B cell (primary cell): ENCODE measurements at regions of chr20 and their contacts with region 1.

Region 1: GRCh38 chr20:50575847-50576720 is 65.9 kb downstream of the PTPN1 start:
- DNase-seq: peak; percentile 74
- ATAC-seq: peak; percentile 85
- H3K4me3 ChIP-seq: no peak overlapping the region
- H3K4me3 Mint-ChIP-seq: no peak overlapping the region
- H3K27ac ChIP-seq: no peak overlapping the region
- H3K27ac Mint-ChIP-seq: peak overlapping the region; percentile 78
- H3K4me1 ChIP-seq: peaks cover 18 to 34% of the 10 kb centered on the region in 2 donors
- H3K4me1 Mint-ChIP-seq: peaks cover 48% of the 10 kb centered on the region
- H3K27me3 ChIP-seq: no peaks in the 10 kb centered on the region
- H3K27me3 Mint-ChIP-seq: no peaks in the 10 kb centered on the region
- CTCF ChIP-seq: peak; percentile 70

Region 2: GRCh38 chr20:50189681-50190582 is 386.2 kb before region 1 on chr20:
- CTCF ChIA-PET with region 1: interaction called, 13 read pairs
- POLR2A ChIA-PET with region 1: no interaction called
- intact Hi-C with region 1: loop called (anchors 1 kb)
- DNase-seq: peak; percentile 89
- ATAC-seq: peak; percentile 73
- H3K4me3 ChIP-seq: peak overlapping the region; percentile 15 to 83 (median 68)
- H3K4me3 Mint-ChIP-seq: peak overlapping the region; percentile 72
- H3K27ac ChIP-seq: no peak overlapping the region
- H3K27ac Mint-ChIP-seq: peak overlapping the region; percentile 80
- H3K4me1 ChIP-seq: peaks cover 16 to 28% of the 10 kb centered on the region in 2 donors
- H3K4me1 Mint-ChIP-seq: peaks cover 16% of the 10 kb centered on the region
- H3K27me3 ChIP-seq: peaks cover 0 to 10% (median 2%) of the 10 kb centered on the region in 4 experiments
- H3K27me3 Mint-ChIP-seq: peaks cover 11% of the 10 kb centered on the region
- CTCF ChIP-seq: peak; percentile 75

Region 3: DNA sequence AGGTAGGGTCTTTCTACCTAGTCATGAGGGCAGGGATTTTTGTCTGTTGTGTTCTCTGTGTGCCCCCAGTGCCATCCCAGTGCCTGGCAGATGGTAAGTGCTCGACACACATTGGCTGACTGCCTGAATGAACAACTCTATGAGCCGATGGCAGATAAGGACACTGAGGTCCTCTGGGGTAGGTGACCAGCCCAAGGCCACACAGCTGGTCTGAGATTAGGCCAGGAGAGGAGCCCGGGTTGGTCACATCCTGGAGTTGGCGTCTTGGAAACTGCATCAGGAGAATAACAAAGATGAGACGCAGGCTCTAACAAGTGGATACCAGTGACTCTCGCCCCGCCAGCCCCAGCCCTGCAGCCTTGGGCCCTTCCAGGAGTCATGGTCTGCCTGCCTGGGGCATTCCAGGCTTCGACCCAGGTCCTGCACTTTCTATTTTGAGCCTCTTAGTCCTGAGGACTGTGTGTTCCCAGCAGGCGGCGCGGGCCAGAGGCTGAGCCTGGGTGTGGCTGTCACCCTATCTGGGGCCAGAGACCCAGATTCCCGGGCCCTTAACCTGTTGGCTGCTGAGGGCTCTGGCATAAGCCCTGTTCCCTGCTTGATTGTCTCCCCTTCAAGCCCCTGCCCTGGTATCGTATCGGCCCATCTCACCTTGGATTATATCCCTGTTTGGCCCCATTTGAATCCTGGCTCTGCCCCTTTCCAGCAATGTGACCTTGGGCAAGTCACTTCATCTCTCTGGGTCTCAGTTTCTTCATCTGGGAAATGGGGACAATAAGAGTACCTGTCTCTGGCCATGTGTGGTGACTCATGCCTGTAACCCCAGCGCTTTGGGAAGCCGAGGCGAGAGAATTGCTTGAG is 297.2 kb before region 1 on chr20:
- CTCF ChIA-PET with region 1: no interaction called
- POLR2A ChIA-PET with region 1: no interaction called
- intact Hi-C with region 1: no loop called
- DNase-seq: no peak
- ATAC-seq: no peak
- H3K4me3 ChIP-seq: no peak overlapping the region
- H3K4me3 Mint-ChIP-seq: no peak overlapping the region
- H3K27ac ChIP-seq: no peak overlapping the region
- H3K27ac Mint-ChIP-seq: no peak overlapping the region
- H3K4me1 ChIP-seq: no peaks in the 10 kb centered on the region
- H3K4me1 Mint-ChIP-seq: no peaks in the 10 kb centered on the region
- H3K27me3 ChIP-seq: peaks cover 0 to 10% (median 2%) of the 10 kb centered on the region in 4 experiments
- H3K27me3 Mint-ChIP-seq: peaks cover 20% of the 10 kb centered on the region
- CTCF ChIP-seq: no peak

Region 4: DNA sequence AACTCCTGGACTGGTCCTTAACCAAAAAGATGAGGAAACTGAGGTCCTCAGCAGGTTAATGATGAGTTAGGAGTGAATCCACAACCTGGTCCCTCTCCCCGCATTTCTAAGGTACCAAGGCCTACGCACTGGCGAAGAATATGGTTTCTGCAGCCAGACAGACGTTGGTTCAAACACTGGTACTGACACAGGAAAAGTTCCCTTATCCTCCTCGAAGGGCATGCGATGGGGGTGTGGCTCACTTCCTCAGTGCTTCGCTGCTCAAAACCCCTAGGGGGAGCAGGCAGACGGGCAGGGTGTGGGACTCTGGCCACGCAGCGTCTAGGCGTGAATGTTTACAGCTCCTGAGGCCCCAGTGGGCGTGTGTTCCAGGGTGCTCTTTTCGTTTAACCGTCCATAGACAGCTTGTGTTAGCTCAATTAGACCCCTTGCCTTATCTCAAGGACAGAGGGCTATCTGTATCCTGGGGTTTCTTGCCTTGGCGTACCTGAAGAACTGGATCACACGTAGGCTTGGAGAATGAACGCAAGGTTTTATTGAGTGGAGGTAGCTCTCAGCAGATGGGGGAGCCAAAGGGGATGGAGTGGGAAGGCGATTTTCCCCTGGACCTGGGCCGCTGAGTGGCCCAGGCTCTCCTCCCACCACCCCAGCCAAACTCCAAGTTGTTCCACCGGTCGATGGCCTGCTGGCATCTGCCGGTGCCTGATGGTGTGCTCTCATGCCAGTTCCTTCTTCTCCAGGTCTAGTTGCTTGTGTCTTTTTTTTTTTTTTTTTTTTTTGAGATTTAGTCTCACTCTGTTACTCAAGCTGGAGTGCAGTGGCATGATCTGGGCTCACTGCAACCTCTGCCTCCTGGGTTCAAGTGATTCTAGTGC is 97.7 kb before region 1 on chr20:
- CTCF ChIA-PET with region 1: interaction called, 169 read pairs
- POLR2A ChIA-PET with region 1: interaction called, 3 read pairs
- intact Hi-C with region 1: loop called (anchors 1 kb)
- DNase-seq: peak; percentile 84
- ATAC-seq: peak; percentile 99
- H3K4me3 ChIP-seq: no peak overlapping the region
- H3K4me3 Mint-ChIP-seq: peak overlapping the region; percentile 44
- H3K27ac ChIP-seq: no peak overlapping the region
- H3K27ac Mint-ChIP-seq: peak overlapping the region; percentile 67
- H3K4me1 ChIP-seq: peaks cover 20 to 32% of the 10 kb centered on the region in 2 donors
- H3K4me1 Mint-ChIP-seq: peaks cover 33% of the 10 kb centered on the region
- H3K27me3 ChIP-seq: no peaks in the 10 kb centered on the region
- H3K27me3 Mint-ChIP-seq: no peaks in the 10 kb centered on the region
- CTCF ChIP-seq: peak; percentile 73

Region 5: GRCh38 chr20:50540620-50541605 is 35.2 kb before region 1 on chr20:
- CTCF ChIA-PET with region 1: interaction called, 49 read pairs
- POLR2A ChIA-PET with region 1: no interaction called
- intact Hi-C with region 1: loop called (anchors 5 kb)
- DNase-seq: no peak
- ATAC-seq: no peak
- H3K4me3 ChIP-seq: peak overlapping the region in 4 of 5 experiments; percentile 3 to 23 (median 11)
- H3K4me3 Mint-ChIP-seq: peak overlapping the region; percentile 87
- H3K27ac ChIP-seq: peak overlapping the region; percentile 74 to 76
- H3K27ac Mint-ChIP-seq: peak overlapping the region; percentile 97
- H3K4me1 ChIP-seq: peaks cover 73 to 89% of the 10 kb centered on the region in 2 donors
- H3K4me1 Mint-ChIP-seq: peaks cover 76% of the 10 kb centered on the region
- H3K27me3 ChIP-seq: no peaks in the 10 kb centered on the region
- H3K27me3 Mint-ChIP-seq: no peaks in the 10 kb centered on the region
- CTCF ChIP-seq: no peak

Region 6: GRCh38 chr20:50561379-50562078 is 14.6 kb before region 1 on chr20:
- CTCF ChIA-PET with region 1: interaction called, 18 read pairs
- POLR2A ChIA-PET with region 1: no interaction called
- intact Hi-C with region 1: no loop called
- DNase-seq: no peak
- ATAC-seq: no peak
- H3K4me3 ChIP-seq: no peak overlapping the region
- H3K4me3 Mint-ChIP-seq: peak overlapping the region; percentile 6
- H3K27ac ChIP-seq: no peak overlapping the region
- H3K27ac Mint-ChIP-seq: peak overlapping the region; percentile 75
- H3K4me1 ChIP-seq: peaks cover 8 to 9% of the 10 kb centered on the region in 2 donors
- H3K4me1 Mint-ChIP-seq: peaks cover 56% of the 10 kb centered on the region
- H3K27me3 ChIP-seq: no peaks in the 10 kb centered on the region
- H3K27me3 Mint-ChIP-seq: no peaks in the 10 kb centered on the region
- CTCF ChIP-seq: no peak

Region 7: DNA sequence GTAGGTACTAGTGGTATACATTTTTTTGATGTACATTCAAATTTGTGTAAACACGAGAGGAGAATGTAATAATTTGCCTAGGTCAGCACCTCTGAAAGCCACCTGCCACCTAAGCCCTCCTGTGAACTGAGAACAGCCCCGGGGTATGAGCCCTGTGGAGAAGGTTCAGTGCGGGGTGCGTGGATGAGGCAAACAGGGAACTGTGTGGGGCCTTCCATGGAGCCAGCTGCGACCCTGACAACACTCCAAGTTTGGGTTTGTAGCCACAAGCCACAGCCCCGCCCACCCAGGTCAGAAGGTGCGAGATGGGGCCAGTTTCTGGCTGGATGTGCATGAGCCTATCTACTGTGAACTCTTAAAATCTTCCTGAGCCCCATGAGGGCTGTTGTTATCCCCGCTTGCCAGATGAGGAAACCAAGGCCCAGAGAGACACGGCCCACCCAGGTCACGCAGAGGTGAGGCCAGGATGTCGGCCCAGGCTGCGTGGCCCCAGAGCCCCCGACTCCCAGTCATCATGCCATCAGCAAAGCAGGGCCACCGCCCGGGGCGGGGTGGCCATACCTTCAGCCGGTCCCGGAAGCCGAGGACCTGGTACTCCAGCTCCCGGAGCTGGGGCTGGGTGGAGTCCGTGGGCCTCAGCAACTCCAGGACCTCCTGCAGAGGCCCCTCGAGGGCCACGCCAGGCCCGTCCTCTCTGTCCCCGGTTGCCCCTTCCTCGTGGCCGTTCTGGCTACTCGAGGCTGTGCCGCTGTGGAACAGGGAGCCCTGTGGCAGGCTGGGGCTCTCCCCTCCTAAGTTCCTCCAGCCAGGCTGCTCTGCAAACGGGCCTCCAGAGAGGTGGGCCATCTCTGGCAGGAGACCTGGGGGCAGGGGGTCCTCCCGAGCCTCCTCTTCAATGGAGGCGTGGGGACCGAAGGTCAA is 25.7 kb after region 1 on chr20:
- CTCF ChIA-PET with region 1: no interaction called
- POLR2A ChIA-PET with region 1: no interaction called
- intact Hi-C with region 1: no loop called
- DNase-seq: no peak
- ATAC-seq: no peak
- H3K4me3 ChIP-seq: no peak overlapping the region
- H3K4me3 Mint-ChIP-seq: no peak overlapping the region
- H3K27ac ChIP-seq: no peak overlapping the region
- H3K27ac Mint-ChIP-seq: no peak overlapping the region
- H3K4me1 ChIP-seq: peaks cover 0 to 3% of the 10 kb centered on the region in 2 donors
- H3K4me1 Mint-ChIP-seq: peaks cover 4% of the 10 kb centered on the region
- H3K27me3 ChIP-seq: peaks cover 0 to 22% (median 2%) of the 10 kb centered on the region in 4 experiments
- H3K27me3 Mint-ChIP-seq: peaks cover 11% of the 10 kb centered on the region
- CTCF ChIP-seq: no peak

Region 8: DNA sequence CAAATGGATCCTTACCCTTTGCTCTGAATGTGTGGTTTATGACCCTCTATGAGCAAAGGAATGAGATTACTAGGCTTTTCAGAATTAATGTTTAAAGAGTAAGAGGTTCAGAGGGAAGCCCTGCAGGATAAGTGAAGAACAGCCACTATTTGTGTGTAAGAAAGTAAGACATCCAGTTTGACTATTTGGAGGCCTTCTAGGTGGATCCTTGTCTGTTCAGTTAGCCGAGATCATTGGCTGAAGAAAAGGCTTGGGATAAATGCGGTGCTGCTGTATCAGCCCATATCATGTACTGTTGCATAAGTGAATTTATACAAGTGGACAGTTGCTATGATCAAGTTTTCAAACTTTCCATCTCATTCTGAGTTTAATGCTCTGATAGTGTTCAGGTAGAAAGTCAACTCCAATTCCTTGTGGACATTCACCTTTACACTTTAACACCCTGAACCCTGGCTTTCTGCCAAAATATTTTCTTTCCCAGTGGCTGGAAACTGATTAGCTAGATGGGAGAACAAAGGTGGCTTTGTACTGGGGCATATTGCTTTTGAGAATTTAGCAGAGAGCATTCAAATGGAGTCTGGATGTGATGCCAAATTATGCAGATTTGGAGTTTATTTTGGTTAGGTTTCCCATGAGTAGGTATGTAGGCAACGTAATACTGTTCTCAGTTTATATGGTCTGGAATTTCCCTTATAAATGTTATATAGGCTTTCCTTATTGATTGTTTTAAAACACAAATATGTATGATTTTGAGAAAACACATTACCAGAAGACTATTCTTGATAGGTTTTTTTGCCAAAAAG is 170.3 kb after region 1 on chr20:
- CTCF ChIA-PET with region 1: no interaction called
- POLR2A ChIA-PET with region 1: no interaction called
- intact Hi-C with region 1: loop called (anchors 5 kb)
- DNase-seq: no peak
- ATAC-seq: no peak
- H3K4me3 ChIP-seq: no peak overlapping the region
- H3K4me3 Mint-ChIP-seq: no peak overlapping the region
- H3K27ac ChIP-seq: no peak overlapping the region
- H3K27ac Mint-ChIP-seq: no peak overlapping the region
- H3K4me1 ChIP-seq: peaks cover 0 to 3% of the 10 kb centered on the region in 2 donors
- H3K4me1 Mint-ChIP-seq: peaks cover 6% of the 10 kb centered on the region
- H3K27me3 ChIP-seq: no peaks in the 10 kb centered on the region
- H3K27me3 Mint-ChIP-seq: no peaks in the 10 kb centered on the region
- CTCF ChIP-seq: no peak